ENCODE measurements at regions of chr3 and their contacts with region 1.

Region 1: GRCh38 chr3:122021811-122022401 is at the start of gene ILDR1:
- DNase-seq: peak; percentile 78
- H3K4me3 ChIP-seq: peak within 1 kb of the TSS; percentile 71
- H3K27ac ChIP-seq: peak within 1 kb of the TSS; percentile 77
- H3K4me1 ChIP-seq: peaks cover 73% of the 10 kb centered on the region
- CTCF ChIP-seq: no peak
- total RNA-seq, gene ILDR1: 1.1 and 2.4 TPM in 2 replicates

Region 2: DNA sequence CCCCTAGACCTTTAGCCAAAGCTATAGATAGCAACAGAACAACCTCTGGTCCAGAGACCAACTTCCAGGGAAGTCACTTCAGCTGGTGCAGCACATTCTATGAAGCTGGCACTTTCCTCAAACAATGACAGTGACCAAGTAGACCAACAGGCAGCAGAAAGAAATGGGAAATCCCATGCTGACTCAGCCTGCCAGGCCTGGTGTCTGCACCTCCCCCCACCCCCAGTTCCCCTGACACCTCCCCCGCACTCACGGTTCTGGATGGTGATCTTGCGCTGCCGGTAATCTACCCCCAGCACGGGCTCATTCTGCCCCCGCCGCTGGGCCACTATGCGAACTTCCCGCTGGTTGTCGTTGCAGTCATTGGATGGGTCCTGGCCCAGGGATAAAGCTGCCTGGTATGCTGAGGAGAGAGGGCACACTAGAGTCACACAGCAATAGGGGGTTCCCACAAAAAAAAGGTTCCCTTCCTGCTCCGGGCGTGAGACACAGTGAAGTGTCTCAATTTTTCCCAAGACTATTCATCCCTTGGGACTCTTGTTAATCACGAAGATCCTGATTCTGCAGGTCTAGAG is 16.8 kb before region 1 on chr3:
- CTCF ChIA-PET with region 1: interaction called, 3 read pairs
- POLR2A ChIA-PET with region 1: interaction called, 47 read pairs
- intact Hi-C with region 1: no loop called
- DNase-seq: no peak
- H3K4me3 ChIP-seq: no peak overlapping the region
- H3K27ac ChIP-seq: no peak overlapping the region
- H3K4me1 ChIP-seq: peaks cover 55% of the 10 kb centered on the region
- CTCF ChIP-seq: no peak

Region 3: GRCh38 chr3:122055215-122055614 is 33.3 kb after region 1 on chr3 and contains the start of gene CD86:
- CTCF ChIA-PET with region 1: interaction called, 3 read pairs
- POLR2A ChIA-PET with region 1: interaction called, 10 read pairs
- intact Hi-C with region 1: no loop called
- DNase-seq: peak; percentile 86
- H3K4me3 ChIP-seq: peak within 1 kb of the TSS; percentile 72
- H3K27ac ChIP-seq: peak within 1 kb of the TSS; percentile 61
- H3K4me1 ChIP-seq: peaks cover 49% of the 10 kb centered on the region
- CTCF ChIP-seq: no peak
- total RNA-seq, gene CD86: 10.8 and 13.5 TPM in 2 replicates

Region 4: DNA sequence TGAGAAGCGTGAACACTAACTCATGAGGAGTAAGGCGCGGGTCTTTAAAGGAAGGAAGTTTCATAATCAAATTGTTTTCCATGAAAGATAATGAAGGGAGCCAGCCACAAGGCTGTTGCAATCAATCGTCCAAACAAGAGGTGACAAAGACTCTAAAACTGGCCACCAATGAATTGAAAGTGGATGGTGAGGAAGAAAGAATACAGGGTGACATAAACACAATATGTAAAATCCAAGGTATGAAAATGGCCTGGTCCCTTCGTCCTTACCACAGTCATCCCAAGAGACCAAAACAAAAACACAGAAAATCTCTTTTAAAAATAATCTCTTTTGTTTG is 45.3 kb after region 1 on chr3:
- CTCF ChIA-PET with region 1: interaction called, 4 read pairs
- POLR2A ChIA-PET with region 1: interaction called, 50 read pairs
- intact Hi-C with region 1: no loop called
- DNase-seq: peak; percentile 39
- H3K4me3 ChIP-seq: peak overlapping the region; percentile 57
- H3K27ac ChIP-seq: peak overlapping the region; percentile 72
- H3K4me1 ChIP-seq: peaks cover 88% of the 10 kb centered on the region
- CTCF ChIP-seq: no peak

Region 5: GRCh38 chr3:122074621-122075265 is 52.8 kb after region 1 on chr3:
- CTCF ChIA-PET with region 1: interaction called, 4 read pairs
- POLR2A ChIA-PET with region 1: interaction called, 17 read pairs
- intact Hi-C with region 1: loop called (anchors 2 kb)
- DNase-seq: peak; percentile 64
- H3K4me3 ChIP-seq: peak overlapping the region; percentile 71
- H3K27ac ChIP-seq: peak overlapping the region; percentile 81
- H3K4me1 ChIP-seq: peaks cover 69% of the 10 kb centered on the region
- CTCF ChIP-seq: no peak

Region 6: DNA sequence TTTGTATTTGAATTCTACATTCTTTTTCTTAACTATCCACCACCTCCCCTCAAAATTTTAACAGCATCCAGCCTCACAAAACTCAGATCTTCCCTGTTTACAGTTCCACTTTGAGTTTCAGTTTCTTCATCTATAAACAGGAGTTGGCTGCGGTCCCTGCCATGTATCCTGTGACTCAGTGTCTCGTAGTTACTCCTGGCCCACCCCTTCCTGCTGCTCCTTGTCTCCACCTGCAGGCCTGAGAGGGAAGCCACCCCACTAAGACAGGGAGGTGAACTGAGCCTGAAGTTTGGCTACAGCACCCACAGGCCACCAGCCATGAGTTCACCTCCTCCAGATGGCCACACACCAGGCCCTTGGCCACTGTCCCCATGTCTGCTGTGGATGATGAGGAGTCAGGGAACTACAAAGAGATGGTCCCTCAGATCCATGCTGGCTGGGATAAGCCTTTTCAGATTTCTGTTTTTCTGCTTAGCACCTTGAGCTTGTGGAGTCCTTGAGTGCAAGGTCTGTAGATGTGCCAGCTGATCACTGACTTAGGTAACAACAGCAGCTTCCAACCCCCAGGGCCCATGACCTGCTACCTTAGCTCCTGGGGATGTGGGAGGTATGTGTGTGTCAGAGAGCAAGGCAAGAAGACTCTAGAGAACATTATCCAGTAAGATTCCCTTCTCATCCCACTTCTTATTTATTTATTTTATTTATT is 70.7 kb after region 1 on chr3:
- CTCF ChIA-PET with region 1: interaction called, 3 read pairs
- POLR2A ChIA-PET with region 1: interaction called, 4 read pairs
- intact Hi-C with region 1: loop called (anchors 1 kb)
- DNase-seq: peak; percentile 56
- H3K4me3 ChIP-seq: peak overlapping the region; percentile 49
- H3K27ac ChIP-seq: peak overlapping the region; percentile 82
- H3K4me1 ChIP-seq: peaks cover 68% of the 10 kb centered on the region
- CTCF ChIP-seq: peak; percentile 87

Region 7: DNA sequence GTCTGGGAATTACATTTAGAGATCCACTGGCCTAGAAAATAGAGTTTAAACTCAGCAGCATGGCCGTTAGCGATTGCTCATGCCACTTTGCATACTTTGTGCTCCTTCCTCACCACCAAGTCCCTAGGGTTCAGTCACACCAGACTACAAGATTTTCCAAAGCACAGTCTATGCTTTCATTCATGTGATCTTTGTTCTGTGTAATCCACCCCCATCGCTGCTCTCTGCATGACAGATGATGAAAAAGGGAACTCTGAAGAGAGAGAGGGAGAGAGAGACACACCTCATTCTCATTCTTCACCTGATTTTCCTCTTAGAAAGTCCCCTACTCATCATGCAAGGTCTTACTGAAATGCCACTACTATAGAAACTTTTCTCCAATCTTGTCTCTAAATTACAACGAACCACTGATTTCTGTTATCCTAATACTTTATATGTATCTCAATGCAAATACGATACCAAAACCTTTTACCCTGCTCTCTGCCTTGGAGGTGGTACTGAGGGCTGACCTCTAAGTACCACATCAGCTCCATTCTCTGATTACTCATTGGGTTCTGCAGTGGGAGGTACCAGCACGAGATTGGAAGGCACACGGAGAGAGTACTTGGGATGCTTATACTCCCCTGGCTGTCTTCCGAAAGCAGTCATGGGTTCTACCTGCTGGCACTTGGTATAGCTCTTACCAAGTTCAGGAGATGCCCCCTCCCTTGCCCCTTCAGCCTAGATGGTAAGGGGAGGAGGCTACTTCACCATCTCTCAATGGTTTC is 554.5 kb after region 1 on chr3:
- CTCF ChIA-PET with region 1: no interaction called
- POLR2A ChIA-PET with region 1: no interaction called
- intact Hi-C with region 1: no loop called
- DNase-seq: peak; percentile 96
- H3K4me3 ChIP-seq: peak overlapping the region; percentile 55
- H3K27ac ChIP-seq: peak overlapping the region; percentile 89
- H3K4me1 ChIP-seq: peaks cover 72% of the 10 kb centered on the region
- CTCF ChIP-seq: no peak

Measured in OCI-LY7 (cell line).